Right ventricle myocardium inferior (tissue), 1 donor: ENCODE measurements at regions of chr4 and their contacts with region 1.

Region 1: DNA sequence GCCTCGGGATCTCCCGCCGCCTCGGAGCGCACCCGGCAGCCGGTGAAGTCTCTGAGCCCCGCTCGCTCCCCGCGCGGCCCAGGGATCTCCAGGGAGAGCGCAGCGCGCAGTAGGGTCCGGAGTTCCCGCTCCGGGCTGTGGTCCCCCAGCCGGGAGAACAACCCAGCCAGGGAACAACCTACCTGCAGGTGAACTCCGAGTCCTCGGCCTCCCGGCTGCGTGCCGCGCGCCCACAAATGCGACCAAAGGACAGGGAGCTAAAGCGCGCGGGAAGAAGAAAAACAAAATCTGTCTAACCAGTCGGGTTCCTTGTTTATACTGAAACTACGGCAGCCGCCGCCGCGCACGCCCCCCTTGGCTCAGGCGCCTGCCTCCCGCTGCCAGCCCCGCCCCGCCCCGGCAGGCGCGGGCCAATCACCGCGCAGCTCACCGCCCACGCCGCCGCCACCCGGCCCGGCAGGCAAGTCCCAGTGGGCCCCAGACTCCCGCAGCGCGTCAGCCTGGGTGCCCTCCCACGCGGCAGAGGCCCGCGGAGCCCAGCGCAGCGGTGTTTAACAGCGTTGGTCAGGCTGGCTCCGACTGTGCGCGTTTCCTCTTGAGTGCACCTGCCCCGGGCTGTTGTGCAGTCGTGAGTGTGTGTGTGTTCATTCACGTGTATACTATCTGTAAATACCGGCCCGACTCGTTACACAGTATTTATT is at the start of gene RASGEF1B:
- DNase-seq: peak; percentile 96
- ATAC-seq: peak; percentile 98
- total RNA-seq, gene RASGEF1B: 3.6 TPM

Region 2: DNA sequence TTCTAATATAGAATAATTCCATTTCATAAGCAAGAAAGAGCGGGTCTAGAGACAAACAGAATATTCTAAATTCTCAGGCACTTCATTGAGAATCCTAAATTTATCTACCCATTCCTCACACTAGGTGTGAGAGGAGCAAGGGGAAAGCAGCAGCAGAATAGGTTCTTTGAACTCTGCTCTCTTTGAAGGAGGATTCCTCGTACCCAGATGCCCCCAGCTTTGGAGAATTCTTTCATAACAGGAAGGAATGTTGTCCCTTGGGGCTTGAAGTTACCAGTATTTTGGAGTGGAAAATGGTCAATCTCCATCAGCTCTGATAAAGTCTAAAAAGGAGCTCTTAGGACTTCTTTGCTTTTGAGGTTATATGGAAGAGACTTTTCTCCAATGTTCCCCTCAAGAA is 59.7 kb after region 1 on chr4:
- intact Hi-C with region 1: loop called (anchors 5 kb)
- DNase-seq: no peak
- ATAC-seq: no peak

Region 3: DNA sequence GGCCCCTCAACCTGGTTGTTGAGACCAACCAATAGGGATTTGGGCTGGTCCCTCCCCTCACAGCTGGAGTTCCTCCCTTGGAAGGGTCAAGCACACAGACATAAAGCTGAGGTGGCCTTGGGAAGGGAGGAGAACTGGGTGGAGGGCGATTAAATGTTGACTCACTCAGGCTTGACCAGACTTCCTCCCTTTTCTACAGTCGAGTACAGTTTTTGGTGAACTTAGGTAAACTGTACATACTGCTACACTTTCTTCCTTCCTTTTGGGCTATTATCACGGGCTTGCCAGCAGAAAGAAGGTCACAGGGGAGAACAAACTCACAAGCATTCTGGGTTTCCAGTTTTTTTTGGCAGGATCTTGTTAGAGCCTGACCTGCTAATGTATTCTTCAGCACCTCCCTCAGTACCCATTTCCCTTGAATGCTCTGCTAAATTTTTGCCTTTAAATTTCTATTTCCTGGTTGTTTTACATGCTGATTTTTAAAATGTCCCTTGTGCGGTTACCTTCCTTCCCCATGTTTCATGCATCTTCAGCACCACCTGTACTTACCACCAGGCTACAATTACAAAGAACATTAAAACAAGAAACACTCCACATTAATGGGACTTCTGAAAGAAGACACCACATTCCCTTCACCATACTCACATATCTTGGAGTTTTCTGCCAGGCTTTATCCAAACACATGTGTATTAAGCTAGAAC is 135.2 kb after region 1 on chr4:
- intact Hi-C with region 1: no loop called
- DNase-seq: no peak
- ATAC-seq: peak; percentile 42

Region 4: GRCh38 chr4:81688085-81688484 is 216.3 kb after region 1 on chr4:
- intact Hi-C with region 1: loop called (anchors 10 kb)
- DNase-seq: no peak
- ATAC-seq: no peak

Region 5: DNA sequence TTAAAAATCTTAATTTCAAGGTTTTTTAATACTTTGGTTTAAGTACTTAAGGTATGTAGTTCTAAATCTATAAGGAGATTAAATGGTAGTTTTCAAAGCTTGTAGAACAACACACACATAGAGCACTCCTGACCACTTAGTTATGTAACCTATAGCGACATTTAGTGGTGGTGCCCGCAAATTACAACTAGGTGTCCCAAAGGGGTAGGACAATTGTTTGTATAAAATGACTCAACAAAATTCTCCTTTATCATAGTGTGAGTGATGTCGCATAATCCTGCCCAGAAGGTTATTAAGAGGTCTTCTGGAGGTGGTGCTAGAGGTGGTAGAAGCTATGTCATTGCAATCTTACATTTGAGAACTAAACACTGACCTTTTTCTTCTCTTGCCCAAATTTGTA is 373.0 kb after region 1 on chr4:
- intact Hi-C with region 1: loop called (anchors 1 kb)
- DNase-seq: no peak
- ATAC-seq: peak; percentile 87

Region 6: DNA sequence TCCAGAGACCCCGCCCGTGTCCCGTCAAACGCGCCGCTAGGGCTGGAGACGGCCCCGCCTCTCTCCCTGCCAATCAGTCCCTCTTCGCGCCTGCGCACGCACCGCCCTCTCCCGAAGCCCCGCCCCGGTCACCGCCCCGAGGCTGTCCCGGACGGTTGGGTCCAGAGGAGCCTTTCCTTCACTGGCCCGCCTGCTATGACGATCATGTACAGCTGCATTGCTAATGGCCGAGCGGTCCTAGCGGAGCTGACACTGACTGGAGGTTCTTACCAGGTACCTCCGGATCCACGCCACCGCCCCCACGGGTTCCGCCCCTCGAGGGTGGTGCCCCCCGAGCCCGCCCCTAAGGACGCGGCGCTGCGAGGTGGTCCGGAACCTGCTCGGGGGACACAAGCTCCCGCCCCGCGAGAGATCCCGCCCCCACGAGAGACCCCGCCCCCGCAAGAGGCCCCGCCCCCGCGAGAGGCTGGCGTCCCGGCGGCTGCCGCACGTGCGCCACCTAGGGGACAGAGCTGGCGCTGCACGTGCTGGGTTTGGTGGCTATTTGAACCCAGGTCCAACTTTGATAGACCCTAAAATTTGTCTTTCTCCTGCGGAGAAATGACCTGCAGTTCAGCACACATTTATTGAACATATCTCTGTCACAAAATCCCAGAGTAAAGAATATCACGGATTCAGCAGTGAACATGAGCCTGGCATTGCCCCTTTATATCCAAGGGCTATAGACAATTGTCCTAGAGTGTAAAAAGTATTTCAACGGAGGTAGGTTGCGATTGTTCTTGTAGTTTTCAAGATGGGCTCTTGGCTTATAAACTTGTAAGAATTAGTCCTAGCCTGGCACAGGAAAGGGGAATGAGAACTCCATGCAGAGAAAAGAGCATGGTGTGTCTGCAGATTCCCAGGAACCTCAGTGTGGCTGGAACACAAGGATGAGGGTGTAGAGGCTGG is 813.4 kb after region 1 on chr4:
- intact Hi-C with region 1: loop called (anchors 10 kb)
- DNase-seq: peak; percentile 99
- ATAC-seq: peak; percentile 100